OCI-LY7 (cell line): ENCODE measurements at regions of chr22 and their contacts with region 1.

Region 1: DNA sequence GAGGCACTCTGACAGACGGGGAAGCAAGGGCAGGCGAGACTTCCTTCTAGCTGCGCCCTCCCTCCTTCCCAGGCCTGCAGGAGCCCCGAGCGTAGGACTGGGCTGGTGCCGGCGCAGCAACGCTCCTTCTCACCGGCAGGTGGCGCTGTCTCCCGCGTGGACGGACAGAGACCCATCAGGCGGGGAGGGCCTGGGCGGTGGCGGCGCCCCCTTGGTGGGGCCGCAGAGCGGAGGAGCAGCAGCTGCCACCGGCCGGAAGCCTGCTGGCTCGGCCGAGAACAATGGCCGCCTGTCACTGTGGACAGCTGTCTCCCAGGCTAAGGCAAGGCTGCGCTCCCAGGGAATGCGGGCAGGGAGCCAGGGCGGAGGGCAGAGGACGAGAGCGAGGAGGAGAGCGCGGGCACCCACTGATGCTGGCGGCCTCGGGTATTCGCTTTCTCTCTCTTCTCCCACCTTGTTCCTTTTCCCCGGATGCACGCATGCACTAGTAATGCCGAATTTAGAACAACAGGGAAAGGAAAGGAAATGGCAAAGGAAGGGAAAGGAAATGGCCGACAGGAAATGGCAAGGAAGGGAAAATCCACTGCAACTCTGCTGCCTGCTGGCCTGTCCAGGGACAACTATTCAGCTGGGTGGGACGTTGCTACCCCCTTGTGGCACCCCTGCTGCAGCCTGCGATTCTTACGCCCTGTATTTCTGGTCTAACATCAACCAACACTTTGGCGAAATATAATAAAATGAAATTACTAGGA is 14.4 kb downstream of the PPM1F start:
- DNase-seq: peak; percentile 92
- H3K4me3 ChIP-seq: peak overlapping the region; percentile 67
- H3K27ac ChIP-seq: peak overlapping the region; percentile 46
- H3K4me1 ChIP-seq: peaks cover 28% of the 10 kb centered on the region
- CTCF ChIP-seq: peak; percentile 87

Region 2: DNA sequence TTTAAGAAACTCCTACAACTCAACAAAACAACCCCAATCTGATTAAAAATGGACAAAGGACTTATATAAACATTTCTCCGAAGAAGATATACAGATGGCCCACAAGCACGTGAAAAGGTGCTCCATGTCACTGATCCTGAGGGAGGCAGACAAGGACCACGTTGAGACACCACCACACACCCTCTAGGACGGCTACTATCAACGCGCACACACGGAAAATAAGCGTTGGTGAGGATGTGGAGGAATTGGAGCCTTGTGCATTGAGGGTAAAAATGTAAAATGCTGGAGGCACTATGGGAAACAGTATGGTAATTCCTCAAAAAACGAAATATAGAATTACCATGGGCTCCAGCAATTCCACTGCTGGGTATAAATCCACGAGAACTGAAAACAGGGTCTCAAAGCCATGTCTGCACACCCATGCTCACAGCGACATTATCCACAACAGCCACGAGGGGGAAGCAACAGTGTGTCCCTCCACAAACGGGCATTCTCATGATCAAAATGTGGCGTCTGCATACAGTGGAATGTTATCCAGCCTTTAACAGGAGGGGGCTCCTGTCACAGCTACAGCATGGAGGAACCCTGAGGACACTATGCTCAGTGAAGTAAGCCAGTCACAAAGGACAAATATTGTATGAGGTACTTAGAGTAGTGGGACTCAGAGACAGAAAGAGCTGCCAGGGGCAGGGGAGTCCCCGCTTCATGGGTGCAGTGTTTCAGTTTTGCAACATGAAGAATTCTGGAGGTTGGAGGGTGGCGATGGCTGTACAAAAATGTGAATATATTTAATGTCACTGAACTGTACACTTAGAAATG is 225.1 kb before region 1 on chr22:
- CTCF ChIA-PET with region 1: no interaction called
- POLR2A ChIA-PET with region 1: no interaction called
- intact Hi-C with region 1: loop called (anchors 1 kb)
- DNase-seq: peak; percentile 84
- H3K4me3 ChIP-seq: no peak overlapping the region
- H3K27ac ChIP-seq: no peak overlapping the region
- H3K4me1 ChIP-seq: peaks cover 13% of the 10 kb centered on the region
- CTCF ChIP-seq: peak; percentile 92

Region 3: GRCh38 chr22:21735200-21736076 is 202.8 kb before region 1 on chr22 and contains the start of gene YPEL1:
- CTCF ChIA-PET with region 1: no interaction called
- POLR2A ChIA-PET with region 1: interaction called, 3 read pairs
- intact Hi-C with region 1: loop called (anchors 5 kb)
- DNase-seq: peak; percentile 96
- H3K4me3 ChIP-seq: peak within 1 kb of the TSS; percentile 74
- H3K27ac ChIP-seq: peak within 1 kb of the TSS; percentile 69
- H3K4me1 ChIP-seq: peaks cover 27% of the 10 kb centered on the region
- CTCF ChIP-seq: no peak
- total RNA-seq, gene YPEL1: 15.1 and 18.8 TPM in 2 replicates

Region 4: GRCh38 chr22:21780259-21780658 is 158.0 kb before region 1 on chr22:
- CTCF ChIA-PET with region 1: no interaction called
- POLR2A ChIA-PET with region 1: no interaction called
- intact Hi-C with region 1: loop called (anchors 5 kb)
- DNase-seq: no peak
- H3K4me3 ChIP-seq: no peak overlapping the region
- H3K27ac ChIP-seq: peak overlapping the region; percentile 88
- H3K4me1 ChIP-seq: peaks cover 56% of the 10 kb centered on the region
- CTCF ChIP-seq: no peak

Region 5: DNA sequence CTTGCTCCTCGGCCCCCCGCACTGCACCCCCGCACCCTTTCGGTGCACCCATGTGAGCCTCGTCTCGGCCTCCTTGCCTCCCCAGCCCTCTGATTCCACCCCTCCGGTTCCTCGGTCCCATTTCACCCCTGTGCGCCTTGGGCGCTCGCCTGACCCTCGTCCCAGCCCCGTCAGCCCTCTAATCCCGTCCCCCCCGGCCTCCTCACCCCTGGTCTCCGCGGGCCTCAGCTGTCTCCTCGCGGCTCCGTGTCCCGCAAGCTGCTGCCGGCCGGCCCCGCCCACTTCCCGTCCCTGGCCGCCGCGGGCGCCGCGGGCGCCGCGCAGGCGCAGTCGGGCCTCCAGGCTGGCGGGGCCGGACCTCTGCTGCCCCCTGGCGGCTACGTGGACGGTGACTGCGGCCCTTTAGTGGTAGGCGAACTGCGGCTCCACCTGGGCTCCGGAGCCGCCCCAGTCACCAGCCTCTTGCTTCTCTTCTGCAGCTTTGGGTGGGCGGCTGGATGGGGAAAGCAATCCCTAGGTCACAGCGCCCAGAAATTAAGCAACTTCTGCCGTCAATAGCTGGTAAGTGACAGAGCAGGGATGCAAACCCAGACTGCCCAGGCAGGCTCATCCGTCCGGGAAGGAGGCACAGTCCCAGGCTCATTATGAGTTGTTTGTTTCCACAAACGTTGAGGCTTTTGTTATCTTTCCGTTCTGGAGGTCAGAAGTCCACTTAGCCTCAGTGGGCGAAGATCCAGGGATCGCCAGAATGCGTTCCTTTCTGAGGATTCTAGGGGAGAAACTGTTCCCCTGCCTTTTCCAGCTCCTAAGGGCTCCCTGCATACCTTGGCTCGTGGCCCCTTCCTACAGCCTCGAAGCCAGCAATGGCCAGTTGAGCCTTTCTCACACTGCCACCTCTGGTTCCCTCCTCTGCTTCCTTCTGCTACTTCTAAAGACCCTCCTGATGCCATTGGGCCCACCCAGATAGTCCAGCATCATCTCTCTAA is 14.6 kb after region 1 on chr22 and contains the start of gene PPM1F:
- CTCF ChIA-PET with region 1: no interaction called
- POLR2A ChIA-PET with region 1: no interaction called
- intact Hi-C with region 1: loop called (anchors 2 kb)
- DNase-seq: peak; percentile 89
- H3K4me3 ChIP-seq: peak within 1 kb of the TSS; percentile 74
- H3K27ac ChIP-seq: no peak within 1 kb of the TSS
- H3K4me1 ChIP-seq: peaks cover 6% of the 10 kb centered on the region
- CTCF ChIP-seq: peak; percentile 90
- total RNA-seq, gene PPM1F: 21.7 and 35.4 TPM in 2 replicates